ENCODE measurements at regions of chr18 and their contacts with region 1.

Region 1: GRCh38 chr18:67515945-67516538 is 478 bp downstream of the DSEL start:
- DNase-seq: peak in 33 of 35 experiments; percentile 2 to 68 (median 26)
- ATAC-seq: peak; percentile 9 to 33 (median 18)
- H3K4me3 ChIP-seq: peak overlapping the region; percentile 71 to 83
- H3K4me3 Mint-ChIP-seq: peak overlapping the region; percentile 87 to 94 (median 92)
- H3K27ac ChIP-seq: no peak overlapping the region
- H3K27ac Mint-ChIP-seq: peak overlapping the region; percentile 36 to 81
- H3K4me1 ChIP-seq: peaks cover 10 to 18% of the 10 kb centered on the region in 2 experiments
- H3K4me1 Mint-ChIP-seq: peaks cover 27 to 33% (median 29%) of the 10 kb centered on the region in 3 donors
- H3K27me3 ChIP-seq: no peaks in the 10 kb centered on the region
- H3K27me3 Mint-ChIP-seq: peaks cover 0 to 3% of the 10 kb centered on the region in 2 donors

Region 2: GRCh38 chr18:67243799-67244587 is 272.0 kb before region 1 on chr18:
- CTCF ChIA-PET with region 1: no interaction called
- POLR2A ChIA-PET with region 1: interaction called in 1 of 2 experiments, 14 read pairs
- DNase-seq: peak in 2 of 35 experiments; percentile 6 to 13
- ATAC-seq: peak; percentile 36 to 60 (median 46)
- H3K4me3 ChIP-seq: peak overlapping the region; percentile 1 to 26
- H3K4me3 Mint-ChIP-seq: peak overlapping the region; percentile 66 to 77 (median 71)
- H3K27ac ChIP-seq: peak overlapping the region; percentile 40
- H3K27ac Mint-ChIP-seq: peak overlapping the region; percentile 84 to 93
- H3K4me1 ChIP-seq: peaks cover 0 to 17% of the 10 kb centered on the region in 2 experiments
- H3K4me1 Mint-ChIP-seq: peaks cover 32 to 40% (median 34%) of the 10 kb centered on the region in 3 donors
- H3K27me3 ChIP-seq: no peaks in the 10 kb centered on the region
- H3K27me3 Mint-ChIP-seq: no peaks in the 10 kb centered on the region

Region 3: DNA sequence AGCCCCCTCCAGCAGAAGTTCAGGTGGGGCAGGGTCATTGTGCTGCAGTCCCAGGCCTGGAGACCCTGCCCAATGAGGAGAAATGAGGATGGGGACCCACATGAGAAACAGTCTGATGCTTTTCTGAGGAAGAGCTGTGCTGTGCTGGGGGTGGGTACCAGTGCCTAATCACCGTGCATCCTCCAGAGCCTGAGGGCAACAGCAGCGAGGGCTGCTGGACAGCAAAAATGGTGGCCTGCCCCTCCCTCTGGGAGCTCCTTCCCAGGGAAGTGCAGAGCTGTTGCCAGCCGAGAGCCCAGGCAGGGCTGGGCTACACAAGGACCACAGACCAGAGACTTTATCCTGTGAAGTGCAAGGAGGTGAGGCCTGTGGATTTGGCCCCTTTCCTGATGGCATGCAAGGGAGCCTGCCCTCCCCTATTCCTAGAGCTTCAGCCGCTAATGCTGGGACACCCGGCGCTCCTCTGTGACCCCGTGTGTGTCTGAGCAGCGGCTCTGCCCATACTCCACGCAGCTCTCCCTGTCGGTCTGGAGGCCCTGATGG is 134.4 kb before region 1 on chr18:
- CTCF ChIA-PET with region 1: no interaction called
- POLR2A ChIA-PET with region 1: interaction called in 1 of 2 experiments, 13 read pairs
- DNase-seq: no peak
- ATAC-seq: no peak
- H3K4me3 ChIP-seq: no peak overlapping the region
- H3K4me3 Mint-ChIP-seq: no peak overlapping the region
- H3K27ac ChIP-seq: no peak overlapping the region
- H3K27ac Mint-ChIP-seq: no peak overlapping the region
- H3K4me1 ChIP-seq: no peaks in the 10 kb centered on the region
- H3K4me1 Mint-ChIP-seq: no peaks in the 10 kb centered on the region
- H3K27me3 ChIP-seq: peaks cover 0 to 10% of the 10 kb centered on the region in 2 experiments
- H3K27me3 Mint-ChIP-seq: no peaks in the 10 kb centered on the region

Region 4: DNA sequence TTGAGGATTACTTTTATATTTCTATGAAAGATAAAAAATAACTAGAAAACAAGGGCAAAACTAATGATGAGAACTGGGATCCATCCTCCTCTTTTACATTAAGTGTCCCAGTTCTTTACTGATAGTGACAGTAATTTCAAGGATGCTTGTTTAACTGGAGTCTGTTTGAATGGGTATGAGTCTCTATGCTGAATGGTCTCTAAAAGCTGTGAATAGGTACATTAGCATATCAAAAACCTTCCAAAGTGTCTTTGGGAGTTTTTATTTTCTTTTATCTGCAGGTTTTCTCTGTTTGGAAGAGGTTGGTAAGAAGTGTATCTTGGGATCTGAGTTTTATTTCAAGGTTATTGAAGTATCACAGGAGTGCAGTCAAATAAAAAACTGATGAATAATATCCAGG is 29.5 kb before region 1 on chr18:
- CTCF ChIA-PET with region 1: no interaction called
- POLR2A ChIA-PET with region 1: no interaction called
- DNase-seq: no peak
- ATAC-seq: no peak
- H3K4me3 ChIP-seq: no peak overlapping the region
- H3K4me3 Mint-ChIP-seq: no peak overlapping the region
- H3K27ac ChIP-seq: no peak overlapping the region
- H3K27ac Mint-ChIP-seq: no peak overlapping the region
- H3K4me1 ChIP-seq: no peaks in the 10 kb centered on the region
- H3K4me1 Mint-ChIP-seq: peaks cover 0 to 2% (median 0%) of the 10 kb centered on the region in 3 donors
- H3K27me3 ChIP-seq: no peaks in the 10 kb centered on the region
- H3K27me3 Mint-ChIP-seq: peaks cover 0 to 7% of the 10 kb centered on the region in 2 donors

Region 5: DNA sequence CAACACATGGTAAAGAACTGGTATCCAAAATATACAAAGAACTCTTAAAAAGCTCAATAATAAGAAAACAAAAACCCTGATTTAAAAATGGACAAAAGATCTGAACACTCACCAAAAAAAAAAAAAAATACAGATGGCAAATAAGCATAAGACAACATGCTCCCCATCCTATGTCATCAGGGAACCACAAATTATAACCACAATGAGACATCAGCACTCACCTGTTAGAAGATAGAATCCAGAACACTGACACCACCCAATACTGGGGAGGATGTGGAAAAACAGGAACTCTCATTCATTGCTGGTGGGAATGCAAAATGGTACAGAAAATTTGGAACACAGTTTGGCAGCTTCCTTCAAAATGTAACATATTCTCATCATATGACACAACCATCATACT is 1132.1 kb after region 1 on chr18:
- CTCF ChIA-PET with region 1: no interaction called
- POLR2A ChIA-PET with region 1: interaction called in 1 of 2 experiments, 10 read pairs
- DNase-seq: no peak
- ATAC-seq: no peak
- H3K4me3 ChIP-seq: no peak overlapping the region
- H3K4me3 Mint-ChIP-seq: no peak overlapping the region
- H3K27ac ChIP-seq: no peak overlapping the region
- H3K27ac Mint-ChIP-seq: no peak overlapping the region
- H3K4me1 ChIP-seq: no peaks in the 10 kb centered on the region
- H3K4me1 Mint-ChIP-seq: no peaks in the 10 kb centered on the region
- H3K27me3 ChIP-seq: peaks cover 0 to 4% of the 10 kb centered on the region in 2 experiments
- H3K27me3 Mint-ChIP-seq: peaks cover 12 to 34% of the 10 kb centered on the region in 2 donors

Measured in T-cell (primary cell).